OCI-LY7 (cell line): ENCODE measurements at regions of chr5 and their contacts with region 1.

Region 1: GRCh38 chr5:54905943-54906537 is 79.4 kb downstream of the ESM1 start:
- DNase-seq: peak; percentile 41
- H3K4me3 ChIP-seq: no peak overlapping the region
- H3K27ac ChIP-seq: no peak overlapping the region
- H3K4me1 ChIP-seq: peaks cover 4% of the 10 kb centered on the region
- CTCF ChIP-seq: peak; percentile 90

Region 2: GRCh38 chr5:54590824-54591223 is 315.2 kb before region 1 on chr5:
- CTCF ChIA-PET with region 1: no interaction called
- POLR2A ChIA-PET with region 1: no interaction called
- intact Hi-C with region 1: no loop called
- DNase-seq: no peak
- H3K4me3 ChIP-seq: no peak overlapping the region
- H3K27ac ChIP-seq: no peak overlapping the region
- H3K4me1 ChIP-seq: no peaks in the 10 kb centered on the region
- CTCF ChIP-seq: no peak

Region 3: DNA sequence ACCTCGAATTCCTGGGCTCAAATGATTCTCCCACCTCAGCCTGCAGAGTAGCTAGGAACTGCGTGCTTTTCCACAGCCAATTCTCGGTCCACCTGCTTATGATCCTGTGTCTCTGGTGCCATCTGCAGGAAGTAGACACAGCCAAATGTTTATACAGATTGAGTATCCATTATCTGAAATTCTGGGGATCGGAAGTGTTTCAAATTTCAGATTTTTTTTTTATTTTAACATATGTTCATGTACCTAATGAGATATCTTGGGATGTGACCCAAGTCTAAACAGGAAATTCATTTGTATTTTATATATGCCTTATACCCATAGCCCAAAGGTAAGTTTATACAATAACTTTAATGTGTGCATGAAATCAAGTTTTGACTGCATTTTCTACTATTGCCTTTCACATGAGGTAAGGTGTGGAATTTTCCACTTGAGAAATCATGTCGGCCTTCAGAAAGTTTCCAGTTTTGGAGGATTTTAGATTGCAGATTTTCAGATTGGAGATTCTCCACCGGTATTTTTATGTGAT is 10.2 kb before region 1 on chr5:
- CTCF ChIA-PET with region 1: no interaction called
- POLR2A ChIA-PET with region 1: no interaction called
- intact Hi-C with region 1: no loop called
- DNase-seq: peak; percentile 10
- H3K4me3 ChIP-seq: no peak overlapping the region
- H3K27ac ChIP-seq: no peak overlapping the region
- H3K4me1 ChIP-seq: no peaks in the 10 kb centered on the region
- CTCF ChIP-seq: peak; percentile 66

Region 4: GRCh38 chr5:55062039-55062779 is 156.2 kb after region 1 on chr5:
- CTCF ChIA-PET with region 1: no interaction called
- POLR2A ChIA-PET with region 1: no interaction called
- intact Hi-C with region 1: no loop called
- DNase-seq: no peak
- H3K4me3 ChIP-seq: no peak overlapping the region
- H3K27ac ChIP-seq: no peak overlapping the region
- H3K4me1 ChIP-seq: no peaks in the 10 kb centered on the region
- CTCF ChIP-seq: no peak

Region 5: GRCh38 chr5:55146543-55147151 is 240.6 kb after region 1 on chr5:
- CTCF ChIA-PET with region 1: no interaction called
- POLR2A ChIA-PET with region 1: no interaction called
- intact Hi-C with region 1: loop called (anchors 1 kb)
- DNase-seq: peak; percentile 71
- H3K4me3 ChIP-seq: no peak overlapping the region
- H3K27ac ChIP-seq: no peak overlapping the region
- H3K4me1 ChIP-seq: no peaks in the 10 kb centered on the region
- CTCF ChIP-seq: peak; percentile 97